Activated B cell treated with CpG ODN at 0.5 μM for 24 hours (primary cell): ENCODE measurements at regions of chr9 and their contacts with region 1.

Region 1: GRCh38 chr9:86486891-86487837 is 133.0 kb upstream of the TUT7 start:
- DNase-seq: no peak
- ATAC-seq: no peak
- H3K4me3 Mint-ChIP-seq: no peak overlapping the region
- H3K27ac Mint-ChIP-seq: no peak overlapping the region
- H3K4me1 Mint-ChIP-seq: no peaks in the 10 kb centered on the region
- H3K27me3 Mint-ChIP-seq: no peaks in the 10 kb centered on the region
- CTCF ChIP-seq: no peak

Region 2: GRCh38 chr9:86116425-86116824 is 370.7 kb before region 1 on chr9:
- CTCF ChIA-PET with region 1: no interaction called
- POLR2A ChIA-PET with region 1: no interaction called
- intact Hi-C with region 1: no loop called
- DNase-seq: no peak
- ATAC-seq: no peak
- H3K4me3 Mint-ChIP-seq: no peak overlapping the region
- H3K27ac Mint-ChIP-seq: no peak overlapping the region
- H3K4me1 Mint-ChIP-seq: no peaks in the 10 kb centered on the region
- H3K27me3 Mint-ChIP-seq: peaks cover 1% of the 10 kb centered on the region
- CTCF ChIP-seq: no peak

Region 3: DNA sequence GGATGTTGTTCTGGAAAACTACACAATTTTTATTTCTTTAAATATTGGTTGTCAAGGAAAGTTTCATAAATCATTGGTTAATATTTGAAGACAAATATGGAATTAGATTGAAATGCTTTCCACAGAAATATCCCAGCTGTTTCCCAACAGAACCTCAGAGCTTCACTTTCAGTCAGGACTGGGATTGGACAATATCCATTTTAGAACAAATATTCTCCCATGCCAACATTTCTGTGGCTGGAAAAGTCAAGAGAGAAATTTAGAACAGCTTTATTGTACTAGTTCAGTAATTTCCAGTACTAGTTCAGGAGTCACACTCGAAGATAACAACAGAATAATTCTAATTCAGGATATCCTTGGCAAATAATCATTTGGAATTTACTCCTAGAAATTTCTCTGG is 16.8 kb before region 1 on chr9:
- CTCF ChIA-PET with region 1: no interaction called
- POLR2A ChIA-PET with region 1: no interaction called
- intact Hi-C with region 1: no loop called
- DNase-seq: no peak
- ATAC-seq: no peak
- H3K4me3 Mint-ChIP-seq: no peak overlapping the region
- H3K27ac Mint-ChIP-seq: no peak overlapping the region
- H3K4me1 Mint-ChIP-seq: no peaks in the 10 kb centered on the region
- H3K27me3 Mint-ChIP-seq: peaks cover 13% of the 10 kb centered on the region
- CTCF ChIP-seq: no peak

Region 4: DNA sequence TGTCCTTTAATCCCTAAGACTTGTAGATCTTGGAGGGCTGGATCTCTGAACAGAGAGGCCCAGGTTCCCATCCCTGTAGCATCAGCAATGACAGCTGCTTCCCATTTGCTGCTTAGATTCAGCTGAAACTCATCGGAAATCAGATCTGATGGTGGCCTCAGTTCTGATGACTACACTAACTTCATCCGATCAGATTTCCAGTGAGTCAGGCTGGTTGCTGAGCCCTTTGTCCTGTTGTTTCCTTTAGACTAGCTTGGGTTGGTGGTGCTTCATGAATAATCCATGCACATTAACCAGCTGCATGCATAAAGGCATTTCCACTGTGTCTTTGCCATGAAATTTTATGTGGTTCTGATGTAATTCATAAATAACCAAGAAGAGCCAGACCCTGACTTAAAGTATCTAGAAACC is 62.2 kb after region 1 on chr9:
- CTCF ChIA-PET with region 1: no interaction called
- POLR2A ChIA-PET with region 1: no interaction called
- intact Hi-C with region 1: loop called (anchors 10 kb)
- DNase-seq: no peak
- ATAC-seq: no peak
- H3K4me3 Mint-ChIP-seq: no peak overlapping the region
- H3K27ac Mint-ChIP-seq: no peak overlapping the region
- H3K4me1 Mint-ChIP-seq: no peaks in the 10 kb centered on the region
- H3K27me3 Mint-ChIP-seq: peaks cover 10% of the 10 kb centered on the region
- CTCF ChIP-seq: no peak

Region 5: GRCh38 chr9:86700629-86701028 is 213.5 kb after region 1 on chr9:
- CTCF ChIA-PET with region 1: no interaction called
- POLR2A ChIA-PET with region 1: no interaction called
- intact Hi-C with region 1: no loop called
- DNase-seq: no peak
- ATAC-seq: no peak
- H3K4me3 Mint-ChIP-seq: no peak overlapping the region
- H3K27ac Mint-ChIP-seq: no peak overlapping the region
- H3K4me1 Mint-ChIP-seq: no peaks in the 10 kb centered on the region
- H3K27me3 Mint-ChIP-seq: no peaks in the 10 kb centered on the region
- CTCF ChIP-seq: no peak